ENCODE measurements at regions of chr10 and their contacts with region 1.

Region 1: GRCh38 chr10:44959247-44960087 is at the start of gene RASSF4:
- DNase-seq: peak; percentile 83 to 93 (median 89)
- ATAC-seq: peak; percentile 99 to 100
- H3K4me3 Mint-ChIP-seq: peak within 1 kb of the TSS; percentile 83 to 92 (median 88)
- H3K27ac Mint-ChIP-seq: peak within 1 kb of the TSS; percentile 48 to 91 (median 86)
- H3K4me1 Mint-ChIP-seq: peaks cover 20 to 62% (median 40%) of the 10 kb centered on the region in 4 donors
- H3K27me3 Mint-ChIP-seq: peaks cover 0 to 9% (median 0%) of the 10 kb centered on the region in 5 donors
- polyA plus RNA-seq, gene RASSF4: 0.40 to 1.7 (median 1.0) TPM

Region 2: GRCh38 chr10:44925224-44925623 is 34.2 kb before region 1 on chr10:
- POLR2A ChIA-PET with region 1: no interaction called
- DNase-seq: peak in 3 of 10 donors; percentile 14 to 25 (median 23)
- ATAC-seq: no peak
- H3K4me3 Mint-ChIP-seq: no peak overlapping the region
- H3K27ac Mint-ChIP-seq: no peak overlapping the region
- H3K4me1 Mint-ChIP-seq: peaks cover 0 to 1% (median 0%) of the 10 kb centered on the region in 4 donors
- H3K27me3 Mint-ChIP-seq: no peaks in the 10 kb centered on the region

Region 3: GRCh38 chr10:45000752-45001380 is 41.4 kb after region 1 on chr10 and contains the start of gene ZNF22:
- POLR2A ChIA-PET with region 1: interaction called, 14 read pairs
- DNase-seq: peak; percentile 68 to 90 (median 80)
- ATAC-seq: peak; percentile 85 to 87
- H3K4me3 Mint-ChIP-seq: peak within 1 kb of the TSS; percentile 82 to 96 (median 92)
- H3K27ac Mint-ChIP-seq: peak within 1 kb of the TSS; percentile 96 to 99 (median 98)
- H3K4me1 Mint-ChIP-seq: peaks cover 17 to 43% (median 34%) of the 10 kb centered on the region in 4 donors
- H3K27me3 Mint-ChIP-seq: no peaks in the 10 kb centered on the region
- polyA plus RNA-seq, gene ZNF22: 54.1 to 62.3 (median 58.7) TPM

Region 4: GRCh38 chr10:45294681-45295080 is 335.2 kb after region 1 on chr10:
- POLR2A ChIA-PET with region 1: no interaction called
- DNase-seq: no peak
- ATAC-seq: no peak
- H3K4me3 Mint-ChIP-seq: no peak overlapping the region
- H3K27ac Mint-ChIP-seq: no peak overlapping the region
- H3K4me1 Mint-ChIP-seq: peaks cover 0 to 18% (median 11%) of the 10 kb centered on the region in 4 donors
- H3K27me3 Mint-ChIP-seq: peaks cover 3 to 11% (median 7%) of the 10 kb centered on the region in 5 donors

Measured in naive thymus-derived CD8-positive, alpha-beta T cell (primary cell).